Heart left ventricle (tissue), 16 donors: ENCODE measurements at regions of chrX and their contacts with region 1.

Region 1: GRCh38 chrX:66110112-66110511 is 53.9 kb upstream of the HEPH start:
- DNase-seq: peak in 1 of 5 donors; percentile 15
- ATAC-seq: no peak
- H3K4me3 ChIP-seq: no peak overlapping the region
- H3K27ac ChIP-seq: no peak overlapping the region
- H3K4me1 ChIP-seq: no peaks in the 10 kb centered on the region
- H3K27me3 ChIP-seq: peaks cover 0 to 35% (median 0%) of the 10 kb centered on the region in 9 donors
- CTCF ChIP-seq: peak; percentile 14 to 67 (median 42)
- POLR2A ChIP-seq: no peak

Region 2: GRCh38 chrX:65581661-65582339 is 528.3 kb before region 1 on chrX:
- intact Hi-C with region 1: loop called in 2 of 10 experiments (anchors 10 kb)
- DNase-seq: peak in 4 of 5 donors; percentile 29 to 50 (median 47)
- ATAC-seq: peak; percentile 61 to 89 (median 84)
- H3K4me3 ChIP-seq: no peak overlapping the region
- H3K27ac ChIP-seq: no peak overlapping the region
- H3K4me1 ChIP-seq: no peaks in the 10 kb centered on the region
- H3K27me3 ChIP-seq: peaks cover 0 to 38% (median 0%) of the 10 kb centered on the region in 9 donors
- CTCF ChIP-seq: peak; percentile 50 to 87 (median 72)
- POLR2A ChIP-seq: no peak